Heart left ventricle (tissue), 16 donors: ENCODE measurements at regions of chr17 and their contacts with region 1.

Region 1: GRCh38 chr17:41792845-41793783 is 6.6 kb upstream of the JUP start:
- DNase-seq: peak in 4 of 5 donors; percentile 74 to 87 (median 80)
- ATAC-seq: peak; percentile 89 to 93 (median 90)
- H3K4me3 ChIP-seq: peak overlapping the region in 9 of 12 donors; percentile 15 to 43 (median 31)
- H3K27ac ChIP-seq: peak overlapping the region; percentile 74 to 98 (median 92)
- H3K4me1 ChIP-seq: peaks cover 10 to 41% (median 31%) of the 10 kb centered on the region in 12 donors
- H3K27me3 ChIP-seq: no peaks in the 10 kb centered on the region
- CTCF ChIP-seq: no peak
- POLR2A ChIP-seq: peak in 1 of 2 donors; percentile 37

Region 2: DNA sequence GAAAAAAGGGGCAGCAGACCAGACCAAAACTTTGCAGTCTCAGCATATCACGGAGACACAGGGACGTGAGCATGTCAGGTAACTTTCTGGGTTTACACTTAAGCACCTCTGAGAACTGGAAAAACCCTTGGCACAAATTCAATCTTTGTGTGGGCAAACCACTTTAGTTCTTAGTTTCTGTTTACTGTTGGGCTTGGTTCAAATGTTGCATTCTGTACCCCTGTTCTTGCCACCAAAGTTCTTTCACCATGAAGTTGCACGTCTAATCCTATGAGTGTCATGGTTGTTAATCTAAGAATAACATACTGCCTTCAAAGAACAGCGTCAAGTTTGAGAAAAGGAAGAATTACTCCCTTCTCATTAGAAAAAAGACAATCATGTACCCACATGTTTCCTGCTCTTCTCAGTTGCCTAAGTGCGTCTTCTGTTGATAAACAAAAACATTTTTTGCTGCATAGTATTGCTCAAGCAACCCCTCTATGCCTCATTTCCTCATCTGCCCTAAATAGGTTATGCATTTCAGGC is 454.1 kb before region 1 on chr17:
- intact Hi-C with region 1: no loop called
- DNase-seq: no peak
- ATAC-seq: no peak
- H3K4me3 ChIP-seq: no peak overlapping the region
- H3K27ac ChIP-seq: peak overlapping the region in 1 of 12 donors; percentile 67
- H3K4me1 ChIP-seq: peaks cover 0 to 25% (median 0%) of the 10 kb centered on the region in 12 donors
- H3K27me3 ChIP-seq: peaks cover 0 to 6% (median 0%) of the 10 kb centered on the region in 9 donors
- CTCF ChIP-seq: no peak
- POLR2A ChIP-seq: no peak

Region 3: GRCh38 chr17:41748275-41748674 is 44.8 kb before region 1 on chr17:
- intact Hi-C with region 1: loop called in 1 of 10 experiments (anchors 5 kb)
- DNase-seq: no peak
- ATAC-seq: no peak
- H3K4me3 ChIP-seq: no peak overlapping the region
- H3K27ac ChIP-seq: no peak overlapping the region
- H3K4me1 ChIP-seq: peaks cover 0 to 2% (median 0%) of the 10 kb centered on the region in 12 donors
- H3K27me3 ChIP-seq: no peaks in the 10 kb centered on the region
- CTCF ChIP-seq: no peak
- POLR2A ChIP-seq: no peak